ENCODE measurements at regions of chr2 and their contacts with region 1.

Region 1: GRCh38 chr2:54570925-54571694 is 115.0 kb downstream of the SPTBN1 start:
- DNase-seq: peak; percentile 57 to 73
- H3K4me3 ChIP-seq: no peak overlapping the region
- H3K4me3 Mint-ChIP-seq: peak overlapping the region; percentile 67
- H3K27ac Mint-ChIP-seq: peak overlapping the region; percentile 99
- H3K4me1 ChIP-seq: peaks cover 89% of the 10 kb centered on the region
- H3K4me1 Mint-ChIP-seq: peaks cover 80% of the 10 kb centered on the region
- H3K27me3 ChIP-seq: no peaks in the 10 kb centered on the region
- H3K27me3 Mint-ChIP-seq: no peaks in the 10 kb centered on the region
- CTCF ChIP-seq: no peak

Region 2: GRCh38 chr2:54088191-54088634 is 482.9 kb before region 1 on chr2:
- CTCF ChIA-PET with region 1: no interaction called
- POLR2A ChIA-PET with region 1: no interaction called
- intact Hi-C with region 1: loop called (anchors 2 kb)
- DNase-seq: peak; percentile 18 to 43
- H3K4me3 ChIP-seq: no peak overlapping the region
- H3K4me3 Mint-ChIP-seq: peak overlapping the region; percentile 41
- H3K27ac Mint-ChIP-seq: no peak overlapping the region
- H3K4me1 ChIP-seq: peaks cover 20% of the 10 kb centered on the region
- H3K4me1 Mint-ChIP-seq: peaks cover 13% of the 10 kb centered on the region
- H3K27me3 ChIP-seq: 0 out of 2 replicates have a peak, but pooled peaks cover 1% of the 10 kb centered on the region
- H3K27me3 Mint-ChIP-seq: peaks cover 15% of the 10 kb centered on the region
- CTCF ChIP-seq: no peak

Region 3: GRCh38 chr2:54531558-54531957 is 39.6 kb before region 1 on chr2:
- CTCF ChIA-PET with region 1: no interaction called
- POLR2A ChIA-PET with region 1: interaction called, 3 read pairs
- intact Hi-C with region 1: loop called (anchors 1 kb)
- DNase-seq: no peak
- H3K4me3 ChIP-seq: no peak overlapping the region
- H3K4me3 Mint-ChIP-seq: no peak overlapping the region
- H3K27ac Mint-ChIP-seq: peak overlapping the region; percentile 99
- H3K4me1 ChIP-seq: peaks cover 39% of the 10 kb centered on the region
- H3K4me1 Mint-ChIP-seq: peaks cover 60% of the 10 kb centered on the region
- H3K27me3 ChIP-seq: no peaks in the 10 kb centered on the region
- H3K27me3 Mint-ChIP-seq: no peaks in the 10 kb centered on the region
- CTCF ChIP-seq: no peak

Region 4: DNA sequence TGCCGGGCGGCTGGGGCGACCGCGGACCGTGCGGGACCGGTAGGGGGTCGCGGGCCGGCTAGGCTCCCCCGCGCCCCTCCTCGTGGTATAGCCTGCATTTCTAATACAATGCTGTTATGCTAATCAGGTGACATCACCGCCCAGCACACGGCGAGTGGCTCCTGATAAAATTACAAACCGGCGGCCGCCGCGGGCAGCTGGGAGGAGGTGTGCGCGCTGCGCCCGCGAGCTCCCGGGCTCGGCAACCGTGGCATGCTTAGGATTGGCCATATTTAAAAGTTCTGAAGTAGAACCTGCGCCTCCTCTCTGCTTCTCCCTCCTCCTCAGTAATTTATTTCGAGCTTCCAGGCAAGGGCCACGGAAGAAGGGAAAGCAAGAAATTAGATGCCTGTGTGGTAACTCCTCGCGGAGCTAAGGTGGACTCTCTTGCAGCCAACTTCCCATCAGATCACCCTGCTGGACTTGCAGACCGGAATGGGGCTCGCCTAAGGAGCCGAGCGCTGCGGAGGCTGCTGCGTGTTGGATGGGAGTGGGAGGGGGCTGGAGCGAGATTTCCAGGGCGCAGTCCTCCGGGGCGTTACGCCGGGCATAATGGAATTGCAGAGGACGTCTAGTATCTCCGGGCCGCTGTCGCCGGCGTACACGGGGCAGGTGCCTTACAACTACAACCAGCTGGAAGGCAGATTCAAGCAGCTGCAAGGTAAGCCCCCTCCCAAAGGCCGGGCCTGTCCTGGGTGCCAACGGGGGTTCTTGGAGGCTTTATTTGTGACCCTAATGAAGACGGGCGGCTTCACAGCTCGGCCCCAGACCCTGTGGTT is 12.7 kb before region 1 on chr2:
- CTCF ChIA-PET with region 1: interaction called, 3 read pairs
- POLR2A ChIA-PET with region 1: interaction called, 20 read pairs
- intact Hi-C with region 1: loop called (anchors 1 kb)
- DNase-seq: peak; percentile 80
- H3K4me3 ChIP-seq: peak overlapping the region; percentile 84
- H3K4me3 Mint-ChIP-seq: peak overlapping the region; percentile 87
- H3K27ac Mint-ChIP-seq: peak overlapping the region; percentile 73
- H3K4me1 ChIP-seq: peaks cover 42% of the 10 kb centered on the region
- H3K4me1 Mint-ChIP-seq: peaks cover 52% of the 10 kb centered on the region
- H3K27me3 ChIP-seq: no peaks in the 10 kb centered on the region
- H3K27me3 Mint-ChIP-seq: no peaks in the 10 kb centered on the region
- CTCF ChIP-seq: no peak

Region 5: GRCh38 chr2:54610700-54611099 is 39.6 kb after region 1 on chr2:
- CTCF ChIA-PET with region 1: no interaction called
- POLR2A ChIA-PET with region 1: no interaction called
- intact Hi-C with region 1: loop called (anchors 2 kb)
- DNase-seq: no peak
- H3K4me3 ChIP-seq: no peak overlapping the region
- H3K4me3 Mint-ChIP-seq: no peak overlapping the region
- H3K27ac Mint-ChIP-seq: no peak overlapping the region
- H3K4me1 ChIP-seq: peaks cover 16% of the 10 kb centered on the region
- H3K4me1 Mint-ChIP-seq: peaks cover 35% of the 10 kb centered on the region
- H3K27me3 ChIP-seq: no peaks in the 10 kb centered on the region
- H3K27me3 Mint-ChIP-seq: no peaks in the 10 kb centered on the region
- CTCF ChIP-seq: no peak

Region 6: GRCh38 chr2:54665436-54665856 is 94.3 kb after region 1 on chr2:
- CTCF ChIA-PET with region 1: no interaction called
- POLR2A ChIA-PET with region 1: no interaction called
- intact Hi-C with region 1: loop called (anchors 1 kb)
- DNase-seq: peak; percentile 63 to 70
- H3K4me3 ChIP-seq: no peak overlapping the region
- H3K4me3 Mint-ChIP-seq: peak overlapping the region; percentile 8
- H3K27ac Mint-ChIP-seq: peak overlapping the region; percentile 83
- H3K4me1 ChIP-seq: peaks cover 33% of the 10 kb centered on the region
- H3K4me1 Mint-ChIP-seq: peaks cover 41% of the 10 kb centered on the region
- H3K27me3 ChIP-seq: no peaks in the 10 kb centered on the region
- H3K27me3 Mint-ChIP-seq: no peaks in the 10 kb centered on the region
- CTCF ChIP-seq: peak; percentile 55 to 68

Region 7: DNA sequence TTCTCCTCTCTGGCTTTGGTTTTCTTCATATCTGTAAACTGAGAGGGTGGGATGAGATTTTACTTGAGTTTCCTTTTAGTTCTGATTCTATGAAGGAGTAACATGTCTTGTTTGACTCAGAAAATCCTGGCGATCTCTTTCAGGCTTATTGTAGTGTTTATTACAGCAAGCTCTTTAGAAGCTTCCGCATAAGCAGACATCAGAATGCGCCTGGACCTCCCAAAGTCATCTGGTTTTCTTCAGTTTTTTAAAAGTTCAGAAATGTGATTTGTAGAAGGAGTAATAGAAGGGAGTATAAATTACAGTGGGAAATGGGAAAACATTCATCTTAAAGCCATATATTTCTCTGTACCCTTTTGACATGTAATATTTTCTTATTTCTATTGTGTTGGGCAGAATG is 220.7 kb after region 1 on chr2:
- CTCF ChIA-PET with region 1: no interaction called
- POLR2A ChIA-PET with region 1: no interaction called
- intact Hi-C with region 1: no loop called
- DNase-seq: no peak
- H3K4me3 ChIP-seq: no peak overlapping the region
- H3K4me3 Mint-ChIP-seq: no peak overlapping the region
- H3K27ac Mint-ChIP-seq: no peak overlapping the region
- H3K4me1 ChIP-seq: no peaks in the 10 kb centered on the region
- H3K4me1 Mint-ChIP-seq: no peaks in the 10 kb centered on the region
- H3K27me3 ChIP-seq: no peaks in the 10 kb centered on the region
- H3K27me3 Mint-ChIP-seq: no peaks in the 10 kb centered on the region
- CTCF ChIP-seq: no peak

Region 8: GRCh38 chr2:55050133-55050994 is 479.3 kb after region 1 on chr2 and contains the start of gene RTN4:
- CTCF ChIA-PET with region 1: no interaction called
- POLR2A ChIA-PET with region 1: no interaction called
- intact Hi-C with region 1: loop called (anchors 5 kb)
- DNase-seq: peak; percentile 99 to 100
- H3K4me3 ChIP-seq: peak within 1 kb of the TSS; percentile 87
- H3K4me3 Mint-ChIP-seq: peak within 1 kb of the TSS; percentile 88
- H3K27ac Mint-ChIP-seq: peak within 1 kb of the TSS; percentile 89
- H3K4me1 ChIP-seq: peaks cover 42% of the 10 kb centered on the region
- H3K4me1 Mint-ChIP-seq: peaks cover 21% of the 10 kb centered on the region
- H3K27me3 ChIP-seq: no peaks in the 10 kb centered on the region
- H3K27me3 Mint-ChIP-seq: no peaks in the 10 kb centered on the region
- CTCF ChIP-seq: no peak
- total RNA-seq, gene RTN4: 231 and 236 TPM in 2 replicates

Measured in Caco-2 (cell line).